ENCODE measurements at regions of chr1 and their contacts with region 1.

Region 1: GRCh38 chr1:145891587-145892485 is 6.2 kb upstream of the ANKRD35 start:
- DNase-seq: peak; percentile 87 to 95
- ATAC-seq: peak; percentile 86 to 95 (median 92)
- H3K4me3 ChIP-seq: peak overlapping the region in 7 of 10 donors; percentile 2 to 28 (median 17)
- H3K27ac ChIP-seq: peak overlapping the region; percentile 67 to 93 (median 82)
- H3K4me1 ChIP-seq: peaks cover 15 to 47% (median 30%) of the 10 kb centered on the region in 9 donors
- H3K27me3 ChIP-seq: no peaks in the 10 kb centered on the region
- CTCF ChIP-seq: peak; percentile 91 to 97 (median 94)

Region 2: GRCh38 chr1:145765574-145765973 is 126.3 kb before region 1 on chr1:
- intact Hi-C with region 1: no loop called
- DNase-seq: no peak
- ATAC-seq: no peak
- H3K4me3 ChIP-seq: no peak overlapping the region
- H3K27ac ChIP-seq: peak overlapping the region in 4 of 10 donors; percentile 16 to 42 (median 22)
- H3K4me1 ChIP-seq: peaks cover 0 to 13% (median 5%) of the 10 kb centered on the region in 9 donors
- H3K27me3 ChIP-seq: no peaks in the 10 kb centered on the region
- CTCF ChIP-seq: no peak

Region 3: GRCh38 chr1:145871994-145872924 is 19.6 kb before region 1 on chr1:
- intact Hi-C with region 1: no loop called
- DNase-seq: peak; percentile 17 to 64
- ATAC-seq: peak; percentile 74 to 84 (median 79)
- H3K4me3 ChIP-seq: peak overlapping the region in 9 of 10 donors; percentile 23 to 60 (median 53)
- H3K27ac ChIP-seq: peak overlapping the region in 9 of 10 donors; percentile 61 to 84 (median 76)
- H3K4me1 ChIP-seq: peaks cover 0 to 21% (median 9%) of the 10 kb centered on the region in 9 donors
- H3K27me3 ChIP-seq: no peaks in the 10 kb centered on the region
- CTCF ChIP-seq: no peak

Region 4: DNA sequence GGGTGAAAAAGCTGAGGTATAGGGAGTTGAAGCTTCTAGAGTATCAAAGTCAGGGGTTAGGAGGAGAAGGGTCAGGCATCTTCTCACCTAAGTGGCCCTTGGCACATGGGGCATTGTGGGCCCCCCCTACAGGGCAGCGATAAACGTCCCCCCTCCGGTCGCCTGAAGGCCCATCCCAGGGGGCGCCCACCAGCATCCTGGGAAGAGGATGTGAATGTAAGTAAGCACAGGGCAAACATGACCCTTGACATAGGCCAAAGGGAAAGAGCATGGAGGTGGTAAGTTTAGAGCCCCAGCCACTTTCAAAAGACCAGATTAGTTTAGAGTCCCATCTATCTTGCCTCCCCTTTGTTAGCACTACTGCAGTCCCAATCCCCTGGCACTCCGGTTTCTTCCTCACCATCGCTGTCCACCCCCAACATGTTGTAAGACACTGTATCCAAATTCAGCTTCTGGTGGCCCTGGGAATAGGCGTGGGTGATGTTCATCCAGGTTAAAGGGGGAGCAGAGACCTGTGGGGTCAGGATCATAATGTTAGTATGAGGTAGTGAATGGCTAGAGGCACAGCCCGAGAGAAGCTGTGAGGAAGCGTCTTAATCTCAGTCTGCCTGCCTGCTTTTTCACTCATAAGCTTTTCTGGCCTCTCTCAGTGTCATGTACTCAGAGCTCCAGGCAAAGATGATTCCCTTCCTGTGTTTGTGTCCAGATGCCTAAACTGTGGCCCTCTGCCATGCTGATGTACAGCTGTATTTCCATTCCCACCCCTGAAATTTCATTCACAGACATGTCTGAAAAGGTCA is 15.3 kb after region 1 on chr1:
- intact Hi-C with region 1: loop called in 5 of 10 experiments (anchors 1 to 2 kb)
- DNase-seq: no peak
- ATAC-seq: peak in 6 of 8 donors; percentile 28 to 78 (median 60)
- H3K4me3 ChIP-seq: no peak overlapping the region
- H3K27ac ChIP-seq: peak overlapping the region in 8 of 10 donors; percentile 3 to 77 (median 62)
- H3K4me1 ChIP-seq: peaks cover 0 to 34% (median 24%) of the 10 kb centered on the region in 9 donors
- H3K27me3 ChIP-seq: no peaks in the 10 kb centered on the region
- CTCF ChIP-seq: no peak

Region 5: DNA sequence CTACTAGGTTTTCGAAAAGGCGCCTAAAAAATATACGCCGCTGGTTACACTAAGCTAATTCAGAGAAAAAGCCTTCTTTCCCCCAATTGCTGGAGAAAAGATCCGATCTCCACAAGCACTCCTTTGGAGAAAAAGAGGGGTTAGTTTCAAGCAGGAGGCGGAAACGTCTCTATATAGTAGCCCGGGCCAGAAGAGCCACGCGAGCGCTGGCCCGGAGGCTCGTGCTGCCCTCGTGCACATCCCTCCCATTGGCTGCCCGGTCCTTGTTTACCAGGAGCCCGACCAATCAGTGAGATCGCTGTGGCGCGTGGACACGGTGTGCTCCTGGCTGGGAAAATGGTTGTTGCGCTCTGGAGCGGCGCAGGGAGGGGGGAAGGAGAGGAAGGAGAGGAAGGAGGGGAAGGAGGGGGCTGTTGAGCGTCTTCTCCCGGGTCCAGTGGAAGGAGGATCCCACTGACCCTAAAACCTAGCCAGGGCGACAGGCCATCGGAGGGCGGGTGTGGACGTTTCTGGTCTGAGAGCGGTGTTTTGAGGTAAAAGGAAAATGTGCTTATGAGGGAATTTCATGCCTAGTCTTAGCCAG is 104.7 kb after region 1 on chr1 and contains the start of gene TXNIP:
- intact Hi-C with region 1: no loop called
- DNase-seq: peak; percentile 99
- ATAC-seq: peak; percentile 90 to 95 (median 93)
- H3K4me3 ChIP-seq: peak within 1 kb of the TSS; percentile 70 to 90 (median 76)
- H3K27ac ChIP-seq: peak within 1 kb of the TSS; percentile 89 to 99 (median 97)
- H3K4me1 ChIP-seq: peaks cover 12 to 65% (median 52%) of the 10 kb centered on the region in 9 donors
- H3K27me3 ChIP-seq: no peaks in the 10 kb centered on the region
- CTCF ChIP-seq: no peak
- total RNA-seq, gene TXNIP: 544 to 1,142 (median 777) TPM

Region 6: GRCh38 chr1:146007506-146008133 is 115.8 kb after region 1 on chr1:
- intact Hi-C with region 1: loop called in 7 of 10 experiments (anchors 1 to 10 kb)
- DNase-seq: no peak
- ATAC-seq: peak in 2 of 8 donors; percentile 10 to 27
- H3K4me3 ChIP-seq: peak overlapping the region in 2 of 10 donors; percentile 26 to 42
- H3K27ac ChIP-seq: peak overlapping the region in 9 of 10 donors; percentile 29 to 91 (median 83)
- H3K4me1 ChIP-seq: peaks cover 0 to 47% (median 24%) of the 10 kb centered on the region in 9 donors
- H3K27me3 ChIP-seq: no peaks in the 10 kb centered on the region
- CTCF ChIP-seq: peak in 2 of 9 donors; percentile 5 to 39

Region 7: GRCh38 chr1:146012737-146013403 is 121.0 kb after region 1 on chr1:
- intact Hi-C with region 1: loop called in 8 of 10 experiments (anchors 1 to 10 kb)
- DNase-seq: peak in 1 of 2 donors; percentile 60
- ATAC-seq: peak in 4 of 8 donors; percentile 40 to 59 (median 45)
- H3K4me3 ChIP-seq: no peak overlapping the region
- H3K27ac ChIP-seq: no peak overlapping the region
- H3K4me1 ChIP-seq: peaks cover 0 to 28% (median 14%) of the 10 kb centered on the region in 9 donors
- H3K27me3 ChIP-seq: peaks cover 0 to 2% (median 0%) of the 10 kb centered on the region in 7 donors
- CTCF ChIP-seq: peak; percentile 53 to 93 (median 81)

Measured in heart right ventricle (tissue), 16 donors.